ENCODE measurements at regions of chr5 and their contacts with region 1.

Region 1: GRCh38 chr5:149367249-149367971 is 9.6 kb downstream of the PCYOX1L start:
- DNase-seq: no peak
- H3K4me3 ChIP-seq: no peak overlapping the region
- CTCF ChIP-seq: peak; percentile 78

Region 2: GRCh38 chr5:149108651-149109280 is 258.6 kb before region 1 on chr5:
- CTCF ChIA-PET with region 1: no interaction called
- POLR2A ChIA-PET with region 1: no interaction called
- DNase-seq: no peak
- H3K4me3 ChIP-seq: no peak overlapping the region
- CTCF ChIP-seq: no peak

Region 3: DNA sequence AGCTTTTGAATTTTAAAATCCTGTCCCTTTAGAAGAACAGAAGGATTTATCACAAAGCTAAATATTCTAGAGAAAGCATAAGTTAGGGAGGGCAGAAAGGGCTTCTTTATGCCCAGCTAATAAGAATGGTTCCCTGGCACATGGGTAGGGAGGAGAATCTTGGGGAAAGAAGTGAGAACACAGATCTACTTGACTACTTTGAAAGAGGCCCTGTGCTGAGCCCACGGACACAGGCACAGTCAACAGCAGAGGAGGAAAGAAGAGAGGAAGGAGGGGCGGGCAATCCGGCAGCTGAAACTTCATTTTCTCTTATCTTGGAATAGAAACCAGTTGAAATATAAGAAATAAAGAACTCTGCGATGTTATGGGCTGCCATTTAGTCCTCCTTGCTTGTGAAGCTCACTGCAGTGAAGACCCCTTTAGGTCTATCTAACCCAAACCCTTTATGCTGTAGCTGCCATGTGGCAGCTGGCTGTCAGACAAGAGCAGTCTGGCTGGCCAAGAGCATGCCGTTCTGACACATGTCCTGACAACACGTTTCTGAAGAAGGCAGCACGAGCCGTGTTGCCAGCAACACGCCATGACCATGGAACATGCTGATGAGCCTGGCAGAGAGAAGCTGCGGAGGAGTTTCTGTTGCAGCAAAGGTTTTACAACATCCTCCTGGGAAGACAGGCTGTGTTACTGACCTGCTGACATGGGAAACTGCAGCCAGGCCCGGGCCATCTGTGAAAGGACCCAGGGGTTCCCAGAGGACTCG is 191.9 kb before region 1 on chr5:
- CTCF ChIA-PET with region 1: no interaction called
- POLR2A ChIA-PET with region 1: no interaction called
- DNase-seq: no peak
- H3K4me3 ChIP-seq: no peak overlapping the region
- CTCF ChIP-seq: no peak

Region 4: GRCh38 chr5:149317281-149318048 is 49.9 kb before region 1 on chr5:
- CTCF ChIA-PET with region 1: interaction called, 329 read pairs
- POLR2A ChIA-PET with region 1: no interaction called
- DNase-seq: no peak
- H3K4me3 ChIP-seq: no peak overlapping the region
- CTCF ChIP-seq: peak; percentile 54

Region 5: GRCh38 chr5:149381987-149382340 is 14.6 kb after region 1 on chr5:
- CTCF ChIA-PET with region 1: interaction called, 470 read pairs
- POLR2A ChIA-PET with region 1: no interaction called
- DNase-seq: no peak
- H3K4me3 ChIP-seq: peak overlapping the region; percentile 18
- CTCF ChIP-seq: peak; percentile 95

Region 6: GRCh38 chr5:149416987-149417710 is 49.7 kb after region 1 on chr5:
- CTCF ChIA-PET with region 1: interaction called, 42 read pairs
- POLR2A ChIA-PET with region 1: no interaction called
- DNase-seq: no peak
- H3K4me3 ChIP-seq: 0 out of 2 replicates have a peak overlapping the region, but pooled peaks have one; percentile 15
- CTCF ChIP-seq: no peak

Region 7: GRCh38 chr5:149442563-149443182 is 75.3 kb after region 1 on chr5:
- CTCF ChIA-PET with region 1: interaction called, 519 read pairs
- POLR2A ChIA-PET with region 1: no interaction called
- DNase-seq: no peak
- H3K4me3 ChIP-seq: no peak overlapping the region
- CTCF ChIP-seq: peak; percentile 96

Region 8: GRCh38 chr5:149567226-149567625 is 199.8 kb after region 1 on chr5:
- CTCF ChIA-PET with region 1: interaction called, 39 read pairs
- POLR2A ChIA-PET with region 1: no interaction called
- DNase-seq: no peak
- H3K4me3 ChIP-seq: no peak overlapping the region
- CTCF ChIP-seq: no peak